Mammary epithelial cell (primary cell): ENCODE measurements at regions of chr1 and their contacts with region 1.

Region 1: DNA sequence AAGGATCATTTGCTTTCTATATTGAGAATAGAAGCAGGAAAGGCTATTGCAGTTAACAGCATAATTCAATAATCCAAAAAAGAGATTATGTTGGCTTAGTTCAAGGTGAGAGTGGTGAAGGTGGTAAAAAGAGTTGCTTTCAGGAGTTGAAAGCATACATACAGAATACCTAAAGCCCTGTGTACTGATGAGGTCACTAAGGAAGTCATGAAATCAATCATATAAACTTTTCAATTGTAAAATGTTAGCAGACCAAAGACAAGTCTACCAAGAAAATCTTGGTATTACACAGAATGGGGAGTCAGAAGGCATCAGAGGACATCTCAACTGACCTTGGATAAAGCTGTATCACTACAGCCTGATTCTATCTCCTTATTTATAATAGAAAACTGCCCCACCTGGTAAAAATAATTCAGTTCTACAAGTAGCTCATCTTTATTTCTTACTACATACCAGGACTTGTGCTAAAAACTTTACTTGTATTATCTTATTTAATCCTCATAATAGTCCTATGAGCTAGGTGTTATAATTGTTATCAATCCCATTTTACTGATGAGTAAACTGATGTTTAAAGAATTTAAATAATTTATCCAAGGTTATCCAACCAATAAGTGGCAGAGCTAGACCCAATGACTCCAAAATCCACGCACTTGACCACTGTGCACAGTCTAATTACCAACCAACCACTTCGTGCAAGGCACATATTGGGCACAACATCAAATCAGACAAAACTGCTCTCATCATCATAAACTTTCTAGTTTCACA is 40.9 kb downstream of the TUT4 start:
- DNase-seq: no peak
- H3K4me3 ChIP-seq: no peak overlapping the region
- H3K27ac ChIP-seq: no peak overlapping the region
- H3K4me1 ChIP-seq: no peaks in the 10 kb centered on the region
- H3K27me3 ChIP-seq: no peaks in the 10 kb centered on the region
- CTCF ChIP-seq: no peak

Region 2: GRCh38 chr1:52432807-52433206 is 79.2 kb before region 1 on chr1:
- CTCF ChIA-PET with region 1: no interaction called
- dilution Hi-C with region 1: loop called (anchors 5 kb)
- in situ Hi-C with region 1: no loop called
- intact Hi-C with region 1: no loop called
- DNase-seq: no peak
- H3K4me3 ChIP-seq: no peak overlapping the region
- H3K27ac ChIP-seq: no peak overlapping the region
- H3K4me1 ChIP-seq: no peaks in the 10 kb centered on the region
- H3K27me3 ChIP-seq: no peaks in the 10 kb centered on the region
- CTCF ChIP-seq: no peak